ENCODE measurements at regions of chr11 and their contacts with region 1.

Region 1: GRCh38 chr11:31487848-31488247 is 21.6 kb downstream of the IMMP1L start:
- DNase-seq: peak in 1 of 5 donors; percentile 11
- H3K4me3 ChIP-seq: no peak overlapping the region
- H3K4me3 Mint-ChIP-seq: no peak overlapping the region
- H3K27ac ChIP-seq: no peak overlapping the region
- H3K27ac Mint-ChIP-seq: peak overlapping the region in 1 of 7 donors; percentile 22
- H3K4me1 ChIP-seq: no peaks in the 10 kb centered on the region
- H3K4me1 Mint-ChIP-seq: peaks cover 9 to 23% (median 17%) of the 10 kb centered on the region in 4 donors
- H3K27me3 ChIP-seq: no peaks in the 10 kb centered on the region
- H3K27me3 Mint-ChIP-seq: no peaks in the 10 kb centered on the region

Region 2: DNA sequence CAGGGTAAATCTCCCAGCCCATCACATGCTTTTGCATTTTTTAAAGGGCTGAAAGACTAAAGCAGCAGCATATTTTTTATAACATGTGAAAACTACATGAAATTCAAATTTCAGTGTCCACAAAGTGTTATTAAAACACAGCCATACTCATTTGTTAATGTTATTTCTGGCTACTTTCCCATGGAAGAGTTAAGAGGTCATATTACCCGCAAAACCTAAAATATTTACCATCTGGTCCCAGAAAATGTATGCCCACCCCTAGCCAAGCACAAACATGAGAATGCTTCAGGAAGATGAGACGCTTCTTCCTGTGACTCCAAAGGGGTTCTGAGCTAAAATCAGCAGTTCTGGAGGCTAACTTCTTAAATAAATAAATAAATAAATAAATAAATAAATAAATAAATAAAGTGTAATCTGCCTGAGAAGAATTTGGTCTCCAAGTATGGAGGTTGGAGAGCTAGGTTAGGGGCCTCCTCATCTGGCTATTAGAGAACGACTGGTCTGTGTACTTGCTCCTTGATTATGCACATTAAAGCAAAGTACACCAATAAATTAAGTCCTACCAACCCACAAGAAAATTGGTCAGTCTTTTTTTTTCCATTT is 11.8 kb after region 1 on chr11:
- CTCF ChIA-PET with region 1: no interaction called
- POLR2A ChIA-PET with region 1: no interaction called
- intact Hi-C with region 1: no loop called
- DNase-seq: no peak
- H3K4me3 ChIP-seq: no peak overlapping the region
- H3K4me3 Mint-ChIP-seq: no peak overlapping the region
- H3K27ac ChIP-seq: no peak overlapping the region
- H3K27ac Mint-ChIP-seq: no peak overlapping the region
- H3K4me1 ChIP-seq: no peaks in the 10 kb centered on the region
- H3K4me1 Mint-ChIP-seq: peaks cover 16 to 23% (median 19%) of the 10 kb centered on the region in 4 donors
- H3K27me3 ChIP-seq: no peaks in the 10 kb centered on the region
- H3K27me3 Mint-ChIP-seq: no peaks in the 10 kb centered on the region

Region 3: DNA sequence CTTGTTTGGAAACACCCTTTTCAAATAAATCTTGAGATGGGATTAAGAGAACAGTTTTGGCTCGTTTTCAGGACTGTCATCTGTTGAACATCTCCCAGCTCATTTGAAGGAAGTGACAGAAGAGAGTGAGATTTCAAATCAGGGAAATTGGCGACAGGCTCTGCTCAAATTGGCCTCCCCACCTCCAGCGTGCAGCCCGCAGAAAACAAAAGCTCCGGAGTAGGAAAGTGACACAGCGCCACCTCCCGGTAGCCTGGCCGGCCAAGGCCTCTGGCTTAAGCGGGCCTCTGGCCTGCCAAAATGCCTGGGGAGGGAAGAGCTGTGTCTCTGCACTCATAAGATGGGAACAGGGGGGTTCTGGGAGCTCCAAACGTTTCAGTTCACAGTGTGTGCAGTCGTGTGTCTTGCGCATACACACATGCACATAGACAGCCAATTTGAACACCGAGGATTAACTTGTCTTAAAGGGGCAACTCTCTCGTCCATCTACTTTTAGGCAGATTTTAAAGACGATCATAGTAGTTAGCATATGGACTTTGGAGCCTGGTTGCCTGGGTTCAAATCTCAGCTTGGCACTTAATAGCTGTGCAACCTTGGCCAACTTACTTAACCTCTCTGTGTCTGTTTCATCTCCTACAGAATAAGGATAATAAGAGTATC is 470.4 kb after region 1 on chr11:
- CTCF ChIA-PET with region 1: interaction called, 8 read pairs
- POLR2A ChIA-PET with region 1: no interaction called
- intact Hi-C with region 1: loop called (anchors 2 kb)
- DNase-seq: peak in 4 of 5 donors; percentile 33 to 40 (median 37)
- H3K4me3 ChIP-seq: no peak overlapping the region
- H3K4me3 Mint-ChIP-seq: peak overlapping the region in 1 of 8 donors; percentile 37
- H3K27ac ChIP-seq: no peak overlapping the region
- H3K27ac Mint-ChIP-seq: no peak overlapping the region
- H3K4me1 ChIP-seq: no peaks in the 10 kb centered on the region
- H3K4me1 Mint-ChIP-seq: peaks cover 0 to 4% (median 0%) of the 10 kb centered on the region in 4 donors
- H3K27me3 ChIP-seq: no peaks in the 10 kb centered on the region
- H3K27me3 Mint-ChIP-seq: peaks cover 0 to 4% of the 10 kb centered on the region in 2 donors

Region 4: GRCh38 chr11:32006799-32007388 is 519.0 kb after region 1 on chr11:
- CTCF ChIA-PET with region 1: no interaction called
- POLR2A ChIA-PET with region 1: no interaction called
- intact Hi-C with region 1: loop called (anchors 2 kb)
- DNase-seq: peak in 4 of 5 donors; percentile 7 to 31 (median 26)
- H3K4me3 ChIP-seq: no peak overlapping the region
- H3K4me3 Mint-ChIP-seq: peak overlapping the region in 1 of 8 donors; percentile 15
- H3K27ac ChIP-seq: no peak overlapping the region
- H3K27ac Mint-ChIP-seq: no peak overlapping the region
- H3K4me1 ChIP-seq: no peaks in the 10 kb centered on the region
- H3K4me1 Mint-ChIP-seq: peaks cover 0 to 3% (median under 1%) of the 10 kb centered on the region in 4 donors
- H3K27me3 ChIP-seq: peaks cover 3% of the 10 kb centered on the region
- H3K27me3 Mint-ChIP-seq: peaks cover 19 to 37% of the 10 kb centered on the region in 2 donors

Measured in CD4-positive, alpha-beta memory T cell (primary cell).